GM12878 (cell line): ENCODE measurements at regions of chr10 and their contacts with region 1.

Region 1: GRCh38 chr10:93482145-93482834 is at the start of gene MYOF:
- DNase-seq: peak; percentile 50
- ATAC-seq: peak; percentile 88
- H3K4me3 ChIP-seq: peak within 1 kb of the TSS; percentile 57; the same call in 1 of the 2 replicates
- H3K27ac ChIP-seq: no peak within 1 kb of the TSS
- H3K4me1 ChIP-seq: peaks cover 9% of the 10 kb centered on the region
- H3K27me3 ChIP-seq: peaks cover 0 to 5% of the 10 kb centered on the region in 2 experiments
- CTCF ChIP-seq: peak; percentile 54 to 76 (median 54); a peak in 4 of 6 replicates
- EP300 ChIP-seq: peak in 1 of 2 experiments; percentile 52; a peak in 1 of 4 replicates
- POLR2A ChIP-seq: no peak
- RAD21 ChIP-seq: peak; percentile 95
- polyA plus RNA-seq, gene MYOF: 0.02 to 0.13 TPM

Region 2: DNA sequence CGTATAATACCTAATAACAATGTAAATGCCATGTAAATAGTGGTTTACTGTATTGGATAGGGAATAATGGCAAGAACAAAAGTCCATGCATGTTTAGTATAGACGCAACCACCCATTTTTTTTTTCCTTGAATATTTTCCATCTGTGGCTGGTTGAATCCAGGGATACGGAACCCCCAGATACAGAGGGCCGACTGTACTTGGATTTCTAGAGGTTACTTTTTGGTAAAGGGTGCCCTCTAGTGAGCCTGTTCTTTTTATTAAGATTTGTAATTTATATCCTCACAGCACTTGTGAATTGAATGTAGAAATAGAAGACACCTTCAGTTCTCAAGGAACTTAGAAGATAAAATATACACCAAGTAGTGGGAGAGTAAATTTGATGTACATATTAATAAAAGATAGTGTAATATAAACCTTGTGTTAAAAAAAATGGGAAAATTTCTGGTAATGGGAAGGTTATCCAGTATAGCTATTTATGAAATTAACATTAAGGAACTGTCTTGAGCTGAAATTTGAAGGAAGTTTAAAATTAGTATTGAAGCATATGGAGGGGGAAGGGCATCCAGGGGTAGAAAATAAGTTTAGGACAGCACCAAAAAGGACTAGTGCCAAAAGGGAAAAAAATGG is 601.9 kb before region 1 on chr10:
- CTCF ChIA-PET with region 1: no interaction called
- POLR2A ChIA-PET with region 1: no interaction called
- RAD21 ChIA-PET with region 1: no interaction called
- SMC1A ChIA-PET with region 1: no interaction called
- in situ Hi-C with region 1: no loop called
- intact Hi-C with region 1: loop called (anchors 10 kb)
- DNase-seq: no peak
- ATAC-seq: peak; percentile 83
- H3K4me3 ChIP-seq: no peak overlapping the region
- H3K27ac ChIP-seq: no peak overlapping the region
- H3K4me1 ChIP-seq: no peaks in the 10 kb centered on the region
- H3K27me3 ChIP-seq: no peaks in the 10 kb centered on the region
- CTCF ChIP-seq: peak; percentile 29 to 57 (median 32); a peak in 4 of 6 replicates
- EP300 ChIP-seq: no peak
- POLR2A ChIP-seq: no peak
- RAD21 ChIP-seq: peak; percentile 76

Region 3: GRCh38 chr10:93363891-93364648 is 118.2 kb before region 1 on chr10:
- CTCF ChIA-PET with region 1: interaction called, 20 read pairs
- POLR2A ChIA-PET with region 1: no interaction called
- RAD21 ChIA-PET with region 1: interaction called, 4 read pairs
- SMC1A ChIA-PET with region 1: interaction called, 4 read pairs
- in situ Hi-C with region 1: no loop called
- intact Hi-C with region 1: no loop called
- DNase-seq: no peak
- ATAC-seq: no peak
- H3K4me3 ChIP-seq: no peak overlapping the region
- H3K27ac ChIP-seq: no peak overlapping the region
- H3K4me1 ChIP-seq: no peaks in the 10 kb centered on the region
- H3K27me3 ChIP-seq: no peaks in the 10 kb centered on the region
- CTCF ChIP-seq: no peak
- EP300 ChIP-seq: no peak
- POLR2A ChIP-seq: no peak
- RAD21 ChIP-seq: no peak

Region 4: GRCh38 chr10:93376372-93377293 is 105.7 kb before region 1 on chr10:
- CTCF ChIA-PET with region 1: interaction called, 283 read pairs
- POLR2A ChIA-PET with region 1: interaction called, 3 read pairs
- RAD21 ChIA-PET with region 1: interaction called, 144 read pairs
- SMC1A ChIA-PET with region 1: interaction called, 157 read pairs
- in situ Hi-C with region 1: loop called (anchors 5 kb)
- intact Hi-C with region 1: loop called (anchors 1 kb)
- DNase-seq: peak; percentile 31
- ATAC-seq: peak; percentile 93
- H3K4me3 ChIP-seq: no peak overlapping the region
- H3K27ac ChIP-seq: no peak overlapping the region
- H3K4me1 ChIP-seq: no peaks in the 10 kb centered on the region
- H3K27me3 ChIP-seq: peaks cover 0 to 2% of the 10 kb centered on the region in 2 experiments; a peak in 1 of 4 replicates
- CTCF ChIP-seq: peak; percentile 87 to 93 (median 92); a peak in 5 of 6 replicates
- EP300 ChIP-seq: no peak
- POLR2A ChIP-seq: no peak
- RAD21 ChIP-seq: peak; percentile 99

Region 5: DNA sequence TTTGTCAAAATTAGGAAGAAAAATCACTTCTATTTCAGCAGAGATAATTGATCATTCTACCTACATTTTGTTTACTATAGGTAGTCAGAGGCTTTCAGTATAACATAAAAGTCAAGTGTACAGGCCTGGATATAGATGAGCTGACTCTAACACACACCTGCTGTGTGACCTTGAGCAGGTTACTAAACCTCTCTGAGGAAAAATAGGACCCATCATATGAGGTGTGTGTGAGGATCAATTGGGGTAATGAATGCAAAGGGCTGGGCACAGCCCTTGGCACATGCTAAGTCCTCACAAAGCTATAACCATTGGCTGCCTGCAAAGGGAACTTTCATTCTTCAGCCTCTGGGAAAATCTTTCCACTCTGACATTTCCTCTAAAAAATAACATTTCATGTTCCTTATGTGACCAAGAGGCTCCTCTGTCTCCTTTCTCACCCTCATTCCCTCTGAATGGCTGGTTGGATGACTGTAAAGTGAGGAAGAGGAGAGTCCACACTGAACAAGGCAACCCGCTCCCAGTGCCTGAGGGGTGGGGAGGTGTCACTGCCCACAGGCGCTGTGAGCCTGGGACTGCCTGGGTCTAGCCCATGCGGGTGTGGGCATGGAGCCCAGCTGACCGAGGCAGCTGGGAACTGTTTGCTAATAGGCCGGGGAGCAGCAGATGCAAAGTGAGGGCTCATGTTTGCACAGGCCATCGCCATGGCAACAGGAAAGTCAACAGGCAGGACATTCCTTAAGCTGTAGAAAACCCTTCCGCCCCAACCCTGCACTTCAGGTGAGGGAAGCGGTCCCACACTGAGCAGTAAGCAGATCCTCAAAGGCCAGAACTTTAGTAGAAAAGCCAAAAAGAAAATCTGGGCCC is 37.0 kb before region 1 on chr10:
- CTCF ChIA-PET with region 1: interaction called, 10 read pairs
- POLR2A ChIA-PET with region 1: no interaction called
- RAD21 ChIA-PET with region 1: interaction called, 6 read pairs
- SMC1A ChIA-PET with region 1: interaction called, 7 read pairs
- in situ Hi-C with region 1: no loop called
- intact Hi-C with region 1: no loop called
- DNase-seq: no peak
- ATAC-seq: peak; percentile 22; the same call in 1 of the 3 replicates
- H3K4me3 ChIP-seq: no peak overlapping the region
- H3K27ac ChIP-seq: no peak overlapping the region
- H3K4me1 ChIP-seq: no peaks in the 10 kb centered on the region
- H3K27me3 ChIP-seq: no peaks in the 10 kb centered on the region
- CTCF ChIP-seq: no peak
- EP300 ChIP-seq: no peak
- POLR2A ChIP-seq: no peak
- RAD21 ChIP-seq: no peak

Region 6: DNA sequence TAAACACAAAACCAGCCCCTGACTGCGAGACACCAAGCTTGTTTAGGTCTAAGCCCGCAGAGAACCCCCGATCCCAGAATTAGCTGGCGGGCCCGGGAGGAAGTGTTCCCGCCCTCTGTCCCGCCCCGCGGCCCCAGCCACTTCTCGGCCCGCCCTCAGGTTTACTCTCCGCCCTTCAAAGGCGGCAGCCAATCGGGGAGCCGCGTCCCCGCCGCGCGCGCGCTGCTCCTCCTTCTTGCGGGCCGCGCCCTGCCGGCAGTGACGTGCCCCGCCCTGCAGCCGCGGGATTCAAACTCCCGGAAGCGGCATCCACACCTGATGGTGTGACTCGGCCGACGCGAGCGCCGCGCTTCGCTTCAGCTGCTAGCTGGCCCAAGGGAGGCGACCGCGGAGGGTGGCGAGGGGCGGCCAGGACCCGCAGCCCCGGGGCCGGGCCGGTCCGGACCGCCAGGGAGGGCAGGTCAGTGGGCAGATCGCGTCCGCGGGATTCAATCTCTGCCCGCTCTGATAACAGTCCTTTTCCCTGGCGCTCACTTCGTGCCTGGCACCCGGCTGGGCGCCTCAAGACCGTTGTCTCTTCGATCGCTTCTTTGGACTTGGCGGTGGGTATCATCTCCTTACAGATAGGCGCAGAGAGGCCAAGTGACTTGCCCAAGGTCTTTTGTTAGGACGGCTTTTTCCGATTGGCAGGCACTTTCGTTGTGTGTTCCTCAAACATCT is 14.2 kb after region 1 on chr10 and contains the start of gene CEP55:
- CTCF ChIA-PET with region 1: interaction called, 28 read pairs
- POLR2A ChIA-PET with region 1: interaction called, 3 read pairs
- RAD21 ChIA-PET with region 1: interaction called, 14 read pairs
- SMC1A ChIA-PET with region 1: interaction called, 17 read pairs
- in situ Hi-C with region 1: no loop called
- intact Hi-C with region 1: no loop called
- DNase-seq: peak; percentile 74
- ATAC-seq: peak; percentile 99
- H3K4me3 ChIP-seq: peak within 1 kb of the TSS; percentile 88
- H3K27ac ChIP-seq: peak within 1 kb of the TSS; percentile 75
- H3K4me1 ChIP-seq: peaks cover 4% of the 10 kb centered on the region
- H3K27me3 ChIP-seq: no peaks in the 10 kb centered on the region
- CTCF ChIP-seq: no peak
- EP300 ChIP-seq: 0 out of 4 replicates have a peak, but pooled peaks of 1 of the 2 experiments have one; percentile 17
- POLR2A ChIP-seq: peak; percentile 90
- RAD21 ChIP-seq: no peak
- polyA plus RNA-seq, gene CEP55: 14.6 to 16.7 TPM

Region 7: DNA sequence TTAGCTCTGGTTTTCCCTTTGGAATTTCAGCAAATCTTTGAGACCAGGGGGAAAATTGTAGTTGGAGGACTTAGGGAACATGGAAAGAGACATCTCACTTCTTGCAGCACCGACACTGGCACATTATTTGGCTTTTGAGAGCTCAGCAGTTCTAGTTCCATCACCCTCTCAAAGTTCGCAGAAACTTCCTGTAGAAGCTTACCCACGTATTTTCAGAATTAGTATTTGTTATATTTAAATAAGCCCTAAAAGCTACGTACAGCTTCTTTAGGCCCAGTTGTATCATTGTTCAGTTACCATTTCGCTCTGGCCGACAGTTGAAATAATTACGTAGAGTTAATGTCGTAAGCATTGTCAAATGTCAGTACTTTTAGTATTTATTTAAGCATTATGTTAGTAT is 27.5 kb after region 1 on chr10:
- CTCF ChIA-PET with region 1: interaction called, 46 read pairs
- POLR2A ChIA-PET with region 1: interaction called, 3 read pairs
- RAD21 ChIA-PET with region 1: interaction called, 42 read pairs
- SMC1A ChIA-PET with region 1: interaction called, 17 read pairs
- in situ Hi-C with region 1: no loop called
- intact Hi-C with region 1: loop called (anchors 2 kb)
- DNase-seq: no peak
- ATAC-seq: no peak
- H3K4me3 ChIP-seq: no peak overlapping the region
- H3K27ac ChIP-seq: no peak overlapping the region
- H3K4me1 ChIP-seq: no peaks in the 10 kb centered on the region
- H3K27me3 ChIP-seq: no peaks in the 10 kb centered on the region
- CTCF ChIP-seq: no peak
- EP300 ChIP-seq: no peak
- POLR2A ChIP-seq: no peak
- RAD21 ChIP-seq: no peak

Region 8: DNA sequence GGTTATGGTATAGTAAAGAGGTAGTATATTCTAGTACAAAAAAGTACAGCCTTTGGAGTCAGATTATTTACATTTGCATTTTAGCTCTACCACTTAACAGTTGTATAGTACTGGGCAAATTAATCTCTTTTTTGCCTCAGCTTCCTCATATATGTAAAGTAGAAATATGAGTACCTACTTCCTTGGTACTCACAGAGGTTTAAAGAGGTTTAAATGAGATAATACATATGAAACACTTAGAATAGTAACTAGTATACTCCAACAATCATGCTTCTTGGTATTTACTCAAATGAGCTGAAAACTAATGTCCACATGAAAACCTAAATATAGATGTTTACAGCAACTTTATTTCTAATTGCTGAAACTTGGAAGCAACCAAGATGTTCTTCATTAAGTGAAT is 205.4 kb after region 1 on chr10:
- CTCF ChIA-PET with region 1: no interaction called
- POLR2A ChIA-PET with region 1: no interaction called
- RAD21 ChIA-PET with region 1: no interaction called
- SMC1A ChIA-PET with region 1: no interaction called
- in situ Hi-C with region 1: no loop called
- intact Hi-C with region 1: no loop called
- DNase-seq: no peak
- ATAC-seq: no peak
- H3K4me3 ChIP-seq: no peak overlapping the region
- H3K27ac ChIP-seq: no peak overlapping the region
- H3K4me1 ChIP-seq: no peaks in the 10 kb centered on the region
- H3K27me3 ChIP-seq: no peaks in the 10 kb centered on the region
- CTCF ChIP-seq: no peak
- EP300 ChIP-seq: no peak
- POLR2A ChIP-seq: no peak
- RAD21 ChIP-seq: no peak